Mammary epithelial cell (primary cell): ENCODE measurements at regions of chr3 and their contacts with region 1.

Region 1: DNA sequence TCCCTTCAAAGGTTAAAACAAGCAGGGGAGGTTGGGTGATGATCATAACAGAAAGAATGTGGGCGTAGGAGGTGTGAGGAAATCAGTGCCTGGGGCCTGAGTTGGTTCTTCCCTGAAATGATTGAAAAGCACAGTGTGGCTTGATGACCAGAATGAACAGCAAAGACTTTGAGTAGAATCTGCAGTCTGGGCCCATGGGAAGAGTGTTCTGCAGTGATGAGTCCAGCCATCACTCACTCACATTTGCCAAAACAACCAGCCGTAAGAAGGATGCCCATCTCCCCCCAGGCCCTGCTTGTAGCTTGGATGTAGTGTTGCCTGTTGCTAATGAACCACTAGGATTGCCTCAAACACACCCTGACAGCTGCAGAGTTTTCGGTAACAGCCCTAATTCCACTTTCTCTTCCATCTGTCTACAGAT is 67.9 kb downstream of the VGLL3 start:
- DNase-seq: peak; percentile 88
- H3K4me3 ChIP-seq: no peak overlapping the region
- H3K27ac ChIP-seq: peak overlapping the region; percentile 88
- H3K4me1 ChIP-seq: peaks cover 22% of the 10 kb centered on the region
- H3K27me3 ChIP-seq: no peaks in the 10 kb centered on the region
- CTCF ChIP-seq: no peak

Region 2: DNA sequence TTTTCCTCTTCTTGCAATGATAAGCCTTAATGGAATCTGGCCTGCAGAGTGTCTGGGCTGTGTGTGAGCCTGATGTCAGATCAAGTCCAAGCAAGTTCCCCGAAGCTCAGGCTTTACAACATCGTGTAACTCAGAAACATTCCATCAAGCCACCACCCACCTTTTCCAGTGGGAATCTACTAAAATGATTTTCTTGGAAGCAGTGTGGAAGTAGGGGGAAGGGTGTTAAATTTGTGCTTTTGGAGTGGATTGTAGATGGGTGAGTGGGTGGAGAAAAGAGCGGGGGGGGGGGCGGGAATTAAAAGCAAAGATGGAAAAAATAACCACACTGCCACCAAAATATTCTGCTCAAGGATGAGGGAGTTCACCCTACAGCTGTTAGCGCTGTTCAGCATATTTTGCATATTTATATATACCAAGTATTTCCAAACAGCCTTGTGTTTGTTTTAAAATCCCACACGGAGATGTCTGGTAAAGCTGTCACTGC is 14.3 kb after region 1 on chr3:
- CTCF ChIA-PET with region 1: no interaction called
- dilution Hi-C with region 1: no loop called
- in situ Hi-C with region 1: no loop called
- intact Hi-C with region 1: loop called (anchors 1 kb)
- DNase-seq: peak; percentile 83
- H3K4me3 ChIP-seq: no peak overlapping the region
- H3K27ac ChIP-seq: peak overlapping the region; percentile 57
- H3K4me1 ChIP-seq: peaks cover 24% of the 10 kb centered on the region
- H3K27me3 ChIP-seq: no peaks in the 10 kb centered on the region
- CTCF ChIP-seq: no peak

Region 3: GRCh38 chr3:86961311-86961710 is 38.2 kb after region 1 on chr3:
- CTCF ChIA-PET with region 1: no interaction called
- dilution Hi-C with region 1: no loop called
- in situ Hi-C with region 1: loop called in 1 of 2 experiments (anchors 5 kb)
- intact Hi-C with region 1: no loop called
- DNase-seq: no peak
- H3K4me3 ChIP-seq: no peak overlapping the region
- H3K27ac ChIP-seq: no peak overlapping the region
- H3K4me1 ChIP-seq: peaks cover 8% of the 10 kb centered on the region
- H3K27me3 ChIP-seq: no peaks in the 10 kb centered on the region
- CTCF ChIP-seq: no peak

Region 4: GRCh38 chr3:87206074-87207034 is 283.3 kb after region 1 on chr3:
- CTCF ChIA-PET with region 1: no interaction called
- dilution Hi-C with region 1: no loop called
- in situ Hi-C with region 1: no loop called
- intact Hi-C with region 1: loop called (anchors 5 kb)
- DNase-seq: peak; percentile 91
- H3K4me3 ChIP-seq: no peak overlapping the region
- H3K27ac ChIP-seq: no peak overlapping the region
- H3K4me1 ChIP-seq: peaks cover 24% of the 10 kb centered on the region
- H3K27me3 ChIP-seq: no peaks in the 10 kb centered on the region
- CTCF ChIP-seq: no peak